PC-3 (cell line): ENCODE measurements at regions of chr1 and their contacts with region 1.

Region 1: DNA sequence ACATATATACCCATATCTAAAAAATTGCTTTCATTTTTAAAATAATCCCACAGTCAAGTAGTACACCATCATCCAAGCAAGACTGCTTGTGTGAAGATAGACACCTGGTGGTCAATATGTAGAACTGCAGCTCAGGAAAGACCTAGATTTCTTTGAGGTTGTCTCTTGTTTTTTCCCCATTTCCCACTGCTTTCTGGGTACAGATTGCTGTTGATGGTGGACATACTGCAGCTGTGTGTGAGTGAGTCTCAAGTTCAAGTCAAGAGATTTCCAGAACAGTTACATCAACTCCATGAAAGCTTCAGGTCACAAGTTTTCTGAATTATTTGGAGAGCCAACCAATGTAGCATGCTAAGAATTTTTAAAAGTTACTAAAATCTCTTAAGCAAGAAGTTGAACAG is 306.4 kb downstream of the DUSP10 start:
- DNase-seq: peak; percentile 84
- ATAC-seq: peak; percentile 4
- H3K4me3 ChIP-seq: no peak overlapping the region
- H3K27ac ChIP-seq: no peak overlapping the region; the same call in 1 of the 2 replicates
- H3K4me1 ChIP-seq: peaks cover 39% of the 10 kb centered on the region
- H3K27me3 ChIP-seq: no peaks in the 10 kb centered on the region
- CTCF ChIP-seq: peak; percentile 99

Region 2: DNA sequence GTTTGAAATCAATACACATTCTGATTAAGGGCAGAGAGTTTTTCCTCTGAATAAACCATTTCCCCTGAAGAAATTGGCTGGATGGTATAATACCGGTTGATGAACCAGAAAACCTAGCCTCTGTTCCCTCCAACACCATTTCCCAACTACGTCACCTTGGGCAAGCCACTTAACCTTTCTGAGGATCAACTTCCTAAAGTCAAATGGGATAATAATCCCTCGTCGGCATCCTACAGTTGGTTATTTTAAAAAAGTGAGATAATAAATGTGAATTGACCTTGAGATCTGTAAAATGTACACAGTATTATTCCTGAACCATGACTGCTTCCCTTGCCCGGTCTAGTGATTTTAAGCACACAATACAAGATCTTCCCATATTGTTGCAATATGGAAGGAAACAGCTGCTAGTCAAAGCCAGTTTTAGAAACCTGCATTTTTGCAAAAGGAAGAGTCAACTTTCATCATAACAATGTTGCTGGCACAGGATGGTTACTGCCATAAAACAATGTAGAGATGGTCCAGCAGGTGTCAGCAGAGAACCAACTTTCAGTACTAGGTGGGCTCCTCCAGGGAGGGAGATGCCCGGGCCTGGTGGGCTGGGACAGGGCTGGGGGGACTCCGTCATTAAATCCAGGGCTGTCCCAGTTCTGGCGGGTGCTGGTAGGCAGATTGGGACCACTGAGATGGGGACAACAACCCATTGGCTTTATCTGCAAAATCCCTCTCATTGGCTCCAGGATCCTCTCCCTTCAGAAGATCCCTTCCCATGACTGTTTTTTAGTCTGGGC is 561.4 kb before region 1 on chr1:
- CTCF ChIA-PET with region 1: interaction called, 3 read pairs
- POLR2A ChIA-PET with region 1: interaction called, 9 read pairs
- intact Hi-C with region 1: loop called (anchors 1 kb)
- DNase-seq: peak; percentile 72
- ATAC-seq: peak; percentile 40
- H3K4me3 ChIP-seq: no peak overlapping the region
- H3K27ac ChIP-seq: no peak overlapping the region
- H3K4me1 ChIP-seq: peaks cover 8% of the 10 kb centered on the region; the same call in 1 of the 2 replicates
- H3K27me3 ChIP-seq: no peaks in the 10 kb centered on the region
- CTCF ChIP-seq: peak; percentile 97

Region 3: GRCh38 chr1:221035680-221036153 is 399.8 kb before region 1 on chr1:
- CTCF ChIA-PET with region 1: no interaction called
- POLR2A ChIA-PET with region 1: no interaction called
- intact Hi-C with region 1: loop called (anchors 10 kb)
- DNase-seq: peak; percentile 92
- ATAC-seq: peak; percentile 46
- H3K4me3 ChIP-seq: peak overlapping the region; percentile 59
- H3K27ac ChIP-seq: peak overlapping the region; percentile 90
- H3K4me1 ChIP-seq: peaks cover 50% of the 10 kb centered on the region
- H3K27me3 ChIP-seq: no peaks in the 10 kb centered on the region
- CTCF ChIP-seq: no peak

Region 4: GRCh38 chr1:221217029-221217428 is 218.5 kb before region 1 on chr1:
- CTCF ChIA-PET with region 1: no interaction called
- POLR2A ChIA-PET with region 1: no interaction called
- intact Hi-C with region 1: loop called (anchors 5 kb)
- DNase-seq: peak; percentile 53
- ATAC-seq: peak; percentile 87
- H3K4me3 ChIP-seq: no peak overlapping the region
- H3K27ac ChIP-seq: peak overlapping the region; percentile 4; the same call in 1 of the 2 replicates
- H3K4me1 ChIP-seq: peaks cover 15% of the 10 kb centered on the region
- H3K27me3 ChIP-seq: no peaks in the 10 kb centered on the region
- CTCF ChIP-seq: no peak

Region 5: GRCh38 chr1:221327954-221328353 is 107.5 kb before region 1 on chr1:
- CTCF ChIA-PET with region 1: no interaction called
- POLR2A ChIA-PET with region 1: interaction called, 12 read pairs
- intact Hi-C with region 1: no loop called
- DNase-seq: no peak
- ATAC-seq: no peak
- H3K4me3 ChIP-seq: no peak overlapping the region
- H3K27ac ChIP-seq: no peak overlapping the region
- H3K4me1 ChIP-seq: no peaks in the 10 kb centered on the region
- H3K27me3 ChIP-seq: no peaks in the 10 kb centered on the region
- CTCF ChIP-seq: no peak

Region 6: DNA sequence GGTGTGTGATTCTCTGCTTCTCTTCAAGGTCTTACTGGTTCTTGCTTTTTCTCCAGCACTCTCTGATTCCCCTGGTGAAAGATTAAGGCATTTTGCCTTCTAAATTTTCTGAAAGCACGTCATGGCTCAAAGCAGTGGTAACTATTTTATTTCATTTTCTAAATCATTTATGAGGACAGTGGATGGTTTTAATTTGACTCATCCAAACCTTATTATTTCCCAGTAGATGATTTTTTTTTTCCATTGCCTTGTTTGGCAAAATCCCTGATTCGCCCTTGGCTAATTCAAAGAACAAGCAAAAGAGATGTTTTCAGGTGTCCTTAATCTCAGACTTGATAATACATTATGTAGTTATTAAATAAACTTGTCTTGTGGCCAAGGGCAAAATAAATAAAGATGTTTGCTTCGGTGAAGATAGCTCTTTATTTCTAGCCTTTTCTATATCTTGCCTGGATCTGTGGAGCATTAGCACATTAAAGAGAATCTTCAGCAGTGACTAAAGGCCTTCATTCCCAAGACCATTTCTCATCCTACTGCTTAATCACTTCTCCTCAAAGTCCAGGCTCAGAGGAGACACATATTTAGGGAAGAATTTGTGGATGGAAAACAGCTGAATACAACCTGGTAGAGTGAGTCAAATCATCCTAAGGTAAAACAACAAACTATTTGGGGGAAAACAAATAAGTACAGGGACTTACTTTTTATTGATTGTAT is 53.4 kb before region 1 on chr1:
- CTCF ChIA-PET with region 1: no interaction called
- POLR2A ChIA-PET with region 1: no interaction called
- intact Hi-C with region 1: no loop called
- DNase-seq: no peak
- ATAC-seq: no peak
- H3K4me3 ChIP-seq: no peak overlapping the region
- H3K27ac ChIP-seq: no peak overlapping the region
- H3K4me1 ChIP-seq: no peaks in the 10 kb centered on the region
- H3K27me3 ChIP-seq: no peaks in the 10 kb centered on the region
- CTCF ChIP-seq: no peak

Region 7: GRCh38 chr1:221612264-221612777 is 176.8 kb after region 1 on chr1:
- CTCF ChIA-PET with region 1: no interaction called
- POLR2A ChIA-PET with region 1: interaction called, 4 read pairs
- intact Hi-C with region 1: loop called (anchors 2 kb)
- DNase-seq: peak; percentile 99
- ATAC-seq: peak; percentile 89
- H3K4me3 ChIP-seq: no peak overlapping the region
- H3K27ac ChIP-seq: peak overlapping the region; percentile 73
- H3K4me1 ChIP-seq: peaks cover 45% of the 10 kb centered on the region
- H3K27me3 ChIP-seq: no peaks in the 10 kb centered on the region
- CTCF ChIP-seq: no peak